ENCODE measurements at regions of chr6 and their contacts with region 1.

Region 1: DNA sequence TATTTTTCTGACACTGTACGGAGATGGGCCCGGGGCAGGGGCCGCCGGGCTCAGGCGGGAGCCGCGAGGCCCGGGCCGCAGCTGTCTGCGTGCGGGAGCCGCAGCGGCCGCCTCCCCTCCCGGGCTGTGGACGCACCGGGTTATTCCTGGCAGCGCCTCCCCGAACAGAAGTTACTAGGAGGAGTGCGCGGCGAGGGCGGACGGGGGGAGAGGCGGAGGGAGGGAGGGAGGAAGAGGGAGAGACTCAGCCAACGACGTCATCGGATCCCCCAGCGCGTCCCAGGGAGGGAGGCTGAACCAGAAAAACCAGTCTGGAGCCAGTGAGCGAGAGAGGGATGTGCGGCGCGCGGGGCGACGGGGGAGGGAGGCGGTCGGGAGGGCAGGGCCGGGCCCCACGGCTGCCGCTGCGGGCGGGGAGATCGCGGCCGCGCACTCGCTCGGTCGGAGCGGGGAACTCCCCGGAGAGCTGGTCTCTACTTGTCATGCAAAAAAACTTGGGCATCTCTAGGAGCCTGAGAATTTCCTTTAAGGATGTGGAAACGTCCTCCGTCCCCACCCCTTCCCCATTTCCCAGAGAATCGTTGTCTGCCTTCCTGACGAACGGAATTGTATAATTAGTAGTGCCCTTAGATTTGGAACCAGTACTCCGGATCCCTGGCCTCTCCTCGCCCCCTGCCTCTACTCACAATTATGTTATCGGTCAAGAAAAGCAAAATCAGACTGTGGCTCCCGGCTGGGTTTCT is 1.4 kb upstream of the HIVEP2 start:
- DNase-seq: peak; percentile 81
- H3K4me3 Mint-ChIP-seq: peak overlapping the region; percentile 92
- H3K27ac Mint-ChIP-seq: peak overlapping the region; percentile 97
- H3K4me1 Mint-ChIP-seq: peaks cover 43% of the 10 kb centered on the region
- H3K27me3 Mint-ChIP-seq: peaks cover 6% of the 10 kb centered on the region

Region 2: GRCh38 chr6:142802124-142802523 is 144.2 kb before region 1 on chr6:
- intact Hi-C with region 1: loop called (anchors 1 kb)
- DNase-seq: no peak
- H3K4me3 Mint-ChIP-seq: peak overlapping the region; percentile 55
- H3K27ac Mint-ChIP-seq: peak overlapping the region; percentile 82
- H3K4me1 Mint-ChIP-seq: peaks cover 80% of the 10 kb centered on the region
- H3K27me3 Mint-ChIP-seq: no peaks in the 10 kb centered on the region

Region 3: GRCh38 chr6:142885182-142885867 is 61.0 kb before region 1 on chr6:
- intact Hi-C with region 1: loop called (anchors 1 kb)
- DNase-seq: peak; percentile 45
- H3K4me3 Mint-ChIP-seq: peak overlapping the region; percentile 96
- H3K27ac Mint-ChIP-seq: peak overlapping the region; percentile 99
- H3K4me1 Mint-ChIP-seq: peaks cover 92% of the 10 kb centered on the region
- H3K27me3 Mint-ChIP-seq: no peaks in the 10 kb centered on the region

Region 4: DNA sequence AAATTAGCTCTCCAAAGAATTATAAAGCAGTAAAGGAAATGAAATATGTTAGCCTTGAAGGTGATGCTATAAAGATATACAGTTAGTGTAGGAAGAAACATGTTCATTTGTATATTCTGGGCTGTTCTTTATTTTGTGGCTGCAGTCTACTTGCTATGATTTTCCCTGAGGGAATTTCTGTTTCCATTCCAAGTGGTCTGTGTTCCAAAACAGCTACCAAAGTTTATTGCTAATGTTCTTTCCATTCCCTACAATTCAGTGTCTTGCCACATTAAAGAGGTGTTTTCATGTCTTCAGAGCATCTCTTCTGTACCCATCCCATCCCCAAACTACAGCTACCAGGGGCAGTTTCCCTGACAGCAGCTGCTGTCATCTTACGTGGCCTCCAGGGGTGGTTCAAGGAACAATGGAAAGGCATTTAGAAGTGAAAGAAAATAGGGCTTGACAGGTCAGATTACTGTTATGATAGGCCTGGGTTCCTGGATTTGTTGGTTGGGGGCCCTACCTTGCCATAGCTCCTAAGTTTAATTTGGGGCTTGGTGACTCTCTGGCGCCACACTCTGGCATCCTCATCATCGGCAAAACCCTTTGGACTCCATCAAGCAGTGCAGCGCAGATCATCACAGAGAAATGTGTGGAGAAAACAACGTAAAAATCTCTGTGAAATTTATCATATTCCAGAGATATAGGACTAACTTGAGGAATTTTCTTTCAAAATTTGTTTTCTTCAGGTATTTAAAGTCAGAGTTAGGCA is 80.5 kb after region 1 on chr6:
- intact Hi-C with region 1: loop called (anchors 1 kb)
- DNase-seq: peak; percentile 9
- H3K4me3 Mint-ChIP-seq: no peak overlapping the region
- H3K27ac Mint-ChIP-seq: no peak overlapping the region
- H3K4me1 Mint-ChIP-seq: peaks cover 11% of the 10 kb centered on the region
- H3K27me3 Mint-ChIP-seq: no peaks in the 10 kb centered on the region

Region 5: GRCh38 chr6:143510991-143511891 is 564.9 kb after region 1 on chr6 and contains the start of gene FUCA2:
- intact Hi-C with region 1: loop called (anchors 5 kb)
- DNase-seq: peak; percentile 64
- H3K4me3 Mint-ChIP-seq: peak within 1 kb of the TSS; percentile 95
- H3K27ac Mint-ChIP-seq: peak within 1 kb of the TSS; percentile 96
- H3K4me1 Mint-ChIP-seq: peaks cover 39% of the 10 kb centered on the region
- H3K27me3 Mint-ChIP-seq: no peaks in the 10 kb centered on the region
- total RNA-seq, gene FUCA2: 15.7 and 16.3 TPM in 2 replicates

Region 6: GRCh38 chr6:144349690-144350527 is 1403.6 kb after region 1 on chr6:
- intact Hi-C with region 1: loop called (anchors 5 kb)
- DNase-seq: no peak
- H3K4me3 Mint-ChIP-seq: peak overlapping the region; percentile 83
- H3K27ac Mint-ChIP-seq: peak overlapping the region; percentile 94
- H3K4me1 Mint-ChIP-seq: peaks cover 89% of the 10 kb centered on the region
- H3K27me3 Mint-ChIP-seq: no peaks in the 10 kb centered on the region

Measured in activated T-helper 1 cell treated with anti-CD3 and anti-CD28 coated beads, Interleukin-12 subunit alpha, Interleukin-12 subunit beta, Interleukin-2, Interleukin-4 antibody, amounts not matched to agents 30 ng/mL and 10 ng/mL and 1 ng/mL, durations not matched to agents 14 hours and 24 hours and 36 hours (primary cell).